ENCODE measurements at regions of chr11 and their contacts with region 1.

Region 1: GRCh38 chr11:96342961-96343711 is at the start of gene MAML2:
- DNase-seq: peak; percentile 92 to 95 (median 93)
- ATAC-seq: peak; percentile 88 to 97 (median 94)
- H3K4me3 ChIP-seq: peak within 1 kb of the TSS; percentile 54 to 80 (median 71)
- H3K27ac ChIP-seq: peak within 1 kb of the TSS in 11 of 12 donors; percentile 74 to 92 (median 79)
- H3K4me1 ChIP-seq: peaks cover 0 to 45% (median 28%) of the 10 kb centered on the region in 12 donors
- H3K27me3 ChIP-seq: no peaks in the 10 kb centered on the region
- CTCF ChIP-seq: peak; percentile 85 to 99 (median 96)
- POLR2A ChIP-seq: no peak
- total RNA-seq, gene MAML2: 2.1 to 10.8 (median 6.1) TPM

Region 2: DNA sequence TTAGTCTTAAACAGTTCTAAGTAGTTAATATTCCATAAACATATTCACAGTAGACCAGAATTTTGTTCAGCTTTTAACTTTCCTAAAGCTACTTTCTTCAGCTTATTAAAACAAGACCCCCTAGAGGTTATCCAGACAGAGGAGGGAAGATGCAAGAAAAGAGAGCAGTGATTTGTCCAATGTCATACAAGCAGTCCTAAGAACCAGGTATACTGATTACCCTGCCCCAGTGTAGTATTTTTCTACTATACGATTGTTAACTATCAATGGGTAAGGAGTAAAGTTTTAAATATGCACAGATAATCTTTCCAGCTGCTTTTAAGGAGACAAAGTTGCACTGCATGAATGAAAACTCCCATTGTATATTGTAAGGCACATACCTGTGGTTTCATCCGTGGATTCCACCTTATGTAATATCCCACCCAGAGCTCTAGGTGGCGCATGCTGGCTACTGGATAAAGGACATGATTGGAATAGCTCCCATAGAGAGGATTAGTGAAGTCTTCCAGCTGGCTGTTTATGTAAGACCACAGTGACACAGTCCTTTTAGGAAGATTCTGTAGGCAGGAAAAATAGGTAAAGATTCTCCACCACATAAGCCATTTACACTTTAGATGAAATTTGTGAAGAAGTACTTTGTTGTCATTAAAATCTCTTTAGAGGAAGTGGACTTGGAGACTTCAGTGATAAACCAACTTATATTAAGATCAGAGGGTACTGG is 507.2 kb before region 1 on chr11:
- intact Hi-C with region 1: loop called in 9 of 10 experiments (anchors 5 to 10 kb)
- DNase-seq: peak; percentile 36 to 60 (median 48)
- ATAC-seq: peak; percentile 83 to 97 (median 95)
- H3K4me3 ChIP-seq: no peak overlapping the region
- H3K27ac ChIP-seq: peak overlapping the region in 3 of 12 donors; percentile 27 to 59 (median 29)
- H3K4me1 ChIP-seq: peaks cover 0 to 11% (median 0%) of the 10 kb centered on the region in 12 donors
- H3K27me3 ChIP-seq: no peaks in the 10 kb centered on the region
- CTCF ChIP-seq: peak; percentile 76 to 93 (median 87)
- POLR2A ChIP-seq: no peak

Region 3: GRCh38 chr11:95923728-95924413 is 419.3 kb before region 1 on chr11 and contains the start of gene MTMR2:
- intact Hi-C with region 1: loop called in 1 of 10 experiments (anchors 5 kb)
- DNase-seq: peak; percentile 83 to 90 (median 85)
- ATAC-seq: peak; percentile 98 to 100 (median 100)
- H3K4me3 ChIP-seq: peak within 1 kb of the TSS; percentile 68 to 93 (median 86)
- H3K27ac ChIP-seq: peak within 1 kb of the TSS; percentile 87 to 98 (median 95)
- H3K4me1 ChIP-seq: peaks cover 0 to 40% (median 23%) of the 10 kb centered on the region in 12 donors
- H3K27me3 ChIP-seq: no peaks in the 10 kb centered on the region
- CTCF ChIP-seq: peak in 1 of 12 donors; percentile 12
- POLR2A ChIP-seq: peak in 1 of 2 donors; percentile 67
- total RNA-seq, gene MTMR2: 13.1 to 23.9 (median 18.8) TPM

Region 4: GRCh38 chr11:96082002-96082899 is 260.9 kb before region 1 on chr11:
- intact Hi-C with region 1: no loop called
- DNase-seq: no peak
- ATAC-seq: peak in 1 of 4 donors; percentile 34
- H3K4me3 ChIP-seq: no peak overlapping the region
- H3K27ac ChIP-seq: no peak overlapping the region
- H3K4me1 ChIP-seq: peaks cover 0 to 32% (median 5%) of the 10 kb centered on the region in 12 donors
- H3K27me3 ChIP-seq: no peaks in the 10 kb centered on the region
- CTCF ChIP-seq: no peak
- POLR2A ChIP-seq: no peak

Region 5: GRCh38 chr11:96162816-96163499 is 180.2 kb before region 1 on chr11:
- intact Hi-C with region 1: loop called in 2 of 10 experiments (anchors 5 kb)
- DNase-seq: peak in 4 of 5 donors; percentile 35 to 56 (median 47)
- ATAC-seq: peak; percentile 68 to 92 (median 91)
- H3K4me3 ChIP-seq: no peak overlapping the region
- H3K27ac ChIP-seq: peak overlapping the region in 11 of 12 donors; percentile 29 to 83 (median 60)
- H3K4me1 ChIP-seq: peaks cover 0 to 55% (median 21%) of the 10 kb centered on the region in 12 donors
- H3K27me3 ChIP-seq: no peaks in the 10 kb centered on the region
- CTCF ChIP-seq: no peak
- POLR2A ChIP-seq: no peak

Region 6: DNA sequence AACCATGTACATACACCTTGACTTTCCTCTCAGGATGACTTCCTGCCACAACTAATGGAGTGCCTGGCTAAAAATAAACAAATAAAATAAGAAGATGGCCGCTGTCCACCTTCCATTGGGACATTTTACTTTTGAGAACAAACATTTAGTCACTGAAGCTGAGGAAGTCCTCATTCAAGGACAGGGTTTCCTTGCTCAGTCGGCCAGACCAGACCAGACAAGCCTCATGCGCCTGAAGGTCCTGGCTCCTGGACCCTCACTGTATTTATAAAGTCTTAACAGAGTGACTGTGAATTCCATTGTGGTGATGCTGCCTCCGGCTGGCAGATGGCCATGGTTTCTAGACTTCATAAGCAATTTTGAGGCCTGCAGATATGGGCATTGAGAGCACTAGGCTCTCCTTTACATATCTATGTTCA is 114.7 kb before region 1 on chr11:
- intact Hi-C with region 1: loop called in 2 of 10 experiments (anchors 5 to 10 kb)
- DNase-seq: peak; percentile 71 to 81 (median 78)
- ATAC-seq: peak; percentile 71 to 90 (median 74)
- H3K4me3 ChIP-seq: no peak overlapping the region
- H3K27ac ChIP-seq: peak overlapping the region; percentile 34 to 87 (median 64)
- H3K4me1 ChIP-seq: peaks cover 0 to 66% (median 27%) of the 10 kb centered on the region in 12 donors
- H3K27me3 ChIP-seq: no peaks in the 10 kb centered on the region
- CTCF ChIP-seq: no peak
- POLR2A ChIP-seq: no peak

Region 7: GRCh38 chr11:96267496-96268032 is 75.6 kb before region 1 on chr11:
- intact Hi-C with region 1: loop called in 2 of 10 experiments (anchors 10 kb)
- DNase-seq: no peak
- ATAC-seq: peak in 2 of 4 donors; percentile 19 to 23
- H3K4me3 ChIP-seq: peak overlapping the region in 2 of 12 donors; percentile 6 to 11
- H3K27ac ChIP-seq: peak overlapping the region in 10 of 12 donors; percentile 2 to 71 (median 42)
- H3K4me1 ChIP-seq: peaks cover 0 to 61% (median 14%) of the 10 kb centered on the region in 12 donors
- H3K27me3 ChIP-seq: no peaks in the 10 kb centered on the region
- CTCF ChIP-seq: no peak
- POLR2A ChIP-seq: no peak

Region 8: DNA sequence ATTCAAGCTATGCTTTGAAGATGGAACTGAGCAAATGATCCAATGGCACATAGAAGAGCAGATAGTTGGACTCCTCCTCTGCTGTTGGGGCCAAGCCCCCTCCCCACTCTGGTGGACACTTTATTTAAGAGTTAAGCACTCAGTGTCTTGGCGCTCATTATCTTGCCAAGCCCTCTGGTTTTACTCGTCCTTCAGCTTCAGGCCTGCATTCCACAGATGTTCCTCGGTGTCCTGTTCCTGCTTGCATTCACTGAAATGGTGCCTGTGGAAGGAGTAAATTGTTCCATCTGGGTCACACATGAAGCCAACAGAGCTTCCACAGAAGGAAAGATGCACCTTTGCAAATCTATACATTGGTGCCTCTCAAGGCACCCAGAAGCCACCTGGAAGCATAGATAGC is 26.3 kb before region 1 on chr11:
- intact Hi-C with region 1: no loop called
- DNase-seq: no peak
- ATAC-seq: peak in 1 of 4 donors; percentile 16
- H3K4me3 ChIP-seq: no peak overlapping the region
- H3K27ac ChIP-seq: no peak overlapping the region
- H3K4me1 ChIP-seq: peaks cover 0 to 94% (median 53%) of the 10 kb centered on the region in 12 donors
- H3K27me3 ChIP-seq: no peaks in the 10 kb centered on the region
- CTCF ChIP-seq: no peak
- POLR2A ChIP-seq: no peak